ENCODE measurements at regions of chr3 and their contacts with region 1.

Region 1: DNA sequence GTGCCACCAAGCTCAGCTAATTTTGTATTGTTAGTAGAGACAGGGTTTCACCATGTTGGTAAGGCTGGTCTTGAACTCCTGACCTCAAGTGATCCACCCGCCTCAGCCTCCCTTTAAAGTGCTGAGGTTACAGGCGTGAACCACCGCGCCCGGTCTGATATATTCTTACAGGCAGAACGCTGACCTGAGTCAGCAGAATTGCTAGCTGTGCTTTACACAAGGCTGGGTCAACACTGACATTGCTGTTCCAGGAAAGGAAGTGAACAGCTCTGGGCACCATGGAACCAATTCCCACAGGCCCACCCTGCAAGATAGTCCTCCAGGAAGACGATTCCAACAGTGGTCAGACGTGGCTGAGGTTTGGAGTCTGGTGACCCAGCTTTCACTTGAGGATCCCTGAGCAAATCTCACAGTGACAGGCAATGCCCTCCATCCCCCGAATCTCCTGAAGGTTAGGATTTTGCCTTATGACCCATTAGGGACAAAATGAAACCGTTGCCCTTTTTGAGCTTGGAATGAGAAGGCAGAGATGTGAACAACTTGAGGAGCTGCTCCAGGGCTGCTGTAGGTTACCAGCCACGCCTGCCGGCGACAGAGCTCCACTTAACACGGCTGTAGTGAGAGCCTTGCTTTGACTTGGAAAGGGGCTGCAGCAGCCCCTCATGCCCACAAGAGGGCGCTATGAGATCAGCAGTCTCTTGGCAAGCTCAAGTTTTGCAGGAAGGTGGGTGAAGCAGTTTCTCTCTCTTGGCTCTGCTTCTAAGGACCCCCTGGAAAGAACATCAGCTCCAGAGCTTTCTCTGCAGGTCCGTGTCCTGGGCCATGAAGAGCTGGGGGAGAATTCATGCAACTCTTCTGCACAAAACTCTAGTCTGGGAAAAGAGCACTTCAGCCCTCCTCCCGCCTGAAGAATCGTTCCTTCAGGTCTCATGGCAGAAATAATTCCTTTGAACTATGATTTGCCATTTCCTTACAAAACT is 74.1 kb downstream of the SENP2 start:
- DNase-seq: peak; percentile 80
- ATAC-seq: peak; percentile 94
- H3K4me3 Mint-ChIP-seq: no peak overlapping the region
- H3K27ac Mint-ChIP-seq: no peak overlapping the region
- H3K4me1 Mint-ChIP-seq: no peaks in the 10 kb centered on the region
- H3K27me3 Mint-ChIP-seq: peaks cover 6% of the 10 kb centered on the region
- CTCF ChIP-seq: peak; percentile 90

Region 2: GRCh38 chr3:185639632-185640206 is 20.5 kb before region 1 on chr3:
- CTCF ChIA-PET with region 1: interaction called, 31 read pairs
- POLR2A ChIA-PET with region 1: no interaction called
- intact Hi-C with region 1: no loop called
- DNase-seq: no peak
- ATAC-seq: no peak
- H3K4me3 Mint-ChIP-seq: no peak overlapping the region
- H3K27ac Mint-ChIP-seq: no peak overlapping the region
- H3K4me1 Mint-ChIP-seq: peaks cover 5% of the 10 kb centered on the region
- H3K27me3 Mint-ChIP-seq: peaks cover 3% of the 10 kb centered on the region
- CTCF ChIP-seq: no peak

Region 3: GRCh38 chr3:185693985-185694653 is 33.9 kb after region 1 on chr3:
- CTCF ChIA-PET with region 1: interaction called, 10 read pairs
- POLR2A ChIA-PET with region 1: no interaction called
- intact Hi-C with region 1: no loop called
- DNase-seq: no peak
- ATAC-seq: no peak
- H3K4me3 Mint-ChIP-seq: no peak overlapping the region
- H3K27ac Mint-ChIP-seq: no peak overlapping the region
- H3K4me1 Mint-ChIP-seq: no peaks in the 10 kb centered on the region
- H3K27me3 Mint-ChIP-seq: no peaks in the 10 kb centered on the region
- CTCF ChIP-seq: no peak

Region 4: DNA sequence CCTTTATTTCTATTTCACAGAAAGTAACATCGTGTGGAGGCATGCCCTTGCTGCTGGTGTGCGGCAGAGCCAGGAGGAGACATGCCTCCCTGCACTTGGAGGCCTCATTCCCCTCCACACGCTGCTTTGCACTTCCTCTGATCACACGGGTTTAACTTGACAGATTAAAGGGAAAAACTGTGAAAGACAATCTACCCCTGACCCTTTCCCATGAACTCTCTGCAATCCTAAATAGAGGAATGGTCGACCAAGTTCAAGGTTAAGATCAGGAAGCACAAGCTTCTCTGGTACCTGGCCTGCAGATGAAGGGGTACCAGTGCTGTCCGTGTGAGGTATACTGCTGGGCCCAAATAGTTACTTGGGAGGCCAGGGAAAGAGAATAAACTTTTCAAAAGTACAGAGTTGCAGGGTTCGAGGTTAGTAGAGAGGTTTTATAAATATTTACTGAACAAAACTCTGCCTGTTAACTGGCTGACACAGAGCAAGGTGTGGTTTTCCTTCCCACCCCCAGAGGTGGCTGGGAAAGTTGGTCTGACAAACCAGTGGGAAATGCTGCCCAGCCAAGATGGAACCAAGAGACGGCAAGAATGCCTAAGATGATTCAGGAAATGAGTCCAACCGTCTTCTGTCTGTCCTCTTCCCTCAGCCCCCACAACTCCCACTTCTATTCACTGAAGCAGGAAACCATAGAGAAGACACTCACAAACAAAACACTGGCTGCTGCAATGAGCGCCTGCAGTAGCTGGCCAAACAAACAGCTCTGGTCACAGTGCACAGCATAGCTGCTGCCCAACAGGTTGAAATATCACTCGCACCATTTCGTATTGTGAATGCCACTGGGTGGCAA is 85.0 kb after region 1 on chr3:
- CTCF ChIA-PET with region 1: interaction called, 13 read pairs
- POLR2A ChIA-PET with region 1: no interaction called
- intact Hi-C with region 1: no loop called
- DNase-seq: no peak
- ATAC-seq: no peak
- H3K4me3 Mint-ChIP-seq: no peak overlapping the region
- H3K27ac Mint-ChIP-seq: no peak overlapping the region
- H3K4me1 Mint-ChIP-seq: peaks cover 4% of the 10 kb centered on the region
- H3K27me3 Mint-ChIP-seq: peaks cover 8% of the 10 kb centered on the region
- CTCF ChIP-seq: no peak

Region 5: GRCh38 chr3:185770109-185770508 is 109.9 kb after region 1 on chr3:
- CTCF ChIA-PET with region 1: interaction called, 59 read pairs
- POLR2A ChIA-PET with region 1: no interaction called
- intact Hi-C with region 1: loop called (anchors 1 kb)
- DNase-seq: no peak
- ATAC-seq: no peak
- H3K4me3 Mint-ChIP-seq: no peak overlapping the region
- H3K27ac Mint-ChIP-seq: no peak overlapping the region
- H3K4me1 Mint-ChIP-seq: peaks cover 4% of the 10 kb centered on the region
- H3K27me3 Mint-ChIP-seq: peaks cover 5% of the 10 kb centered on the region
- CTCF ChIP-seq: no peak

Region 6: DNA sequence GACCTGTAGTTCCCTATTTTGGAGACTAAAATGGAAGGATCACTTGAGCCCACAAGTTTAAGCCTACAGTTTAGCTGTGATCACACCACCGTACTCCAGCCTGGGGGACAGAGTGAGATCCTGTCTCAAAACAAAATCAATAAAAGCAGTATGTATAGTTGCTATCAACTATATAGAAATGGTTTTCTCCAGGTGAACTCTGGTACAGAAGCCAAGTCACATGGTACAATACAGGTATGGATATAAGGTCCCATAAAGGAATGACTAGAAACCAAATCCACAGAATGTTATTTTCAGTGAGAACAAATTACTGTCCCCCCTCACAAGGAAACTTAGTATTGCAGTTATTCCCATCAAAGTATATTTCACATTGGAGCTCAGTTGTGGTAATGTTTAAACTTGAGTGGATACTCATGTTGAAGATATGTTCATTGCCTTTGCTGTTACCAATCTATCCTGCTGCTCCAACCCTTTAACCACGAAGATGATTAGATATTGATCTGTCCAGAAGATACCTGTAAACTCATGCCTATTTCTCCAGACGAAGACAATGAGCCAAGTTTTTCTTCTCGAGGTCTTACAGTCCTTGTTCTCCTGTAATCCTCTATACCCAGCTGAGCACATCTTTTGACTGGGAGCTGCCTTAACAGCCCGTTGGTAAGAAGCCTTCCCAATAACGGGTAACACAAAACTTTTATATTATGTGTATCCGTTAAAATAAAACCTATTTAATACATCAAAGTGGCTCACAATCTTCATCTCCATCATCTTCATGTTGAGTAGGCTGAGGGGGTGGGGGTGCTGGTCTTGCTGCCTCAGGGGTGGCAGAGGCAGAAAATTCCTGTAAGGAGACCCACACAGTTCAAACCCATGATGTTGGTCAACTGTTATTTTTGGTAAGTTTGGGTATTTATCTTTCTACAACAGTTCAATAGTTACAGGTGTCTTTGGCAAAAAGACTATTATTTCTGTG is 253.0 kb after region 1 on chr3:
- CTCF ChIA-PET with region 1: interaction called, 13 read pairs
- POLR2A ChIA-PET with region 1: no interaction called
- intact Hi-C with region 1: no loop called
- DNase-seq: no peak
- ATAC-seq: peak; percentile 10
- H3K4me3 Mint-ChIP-seq: no peak overlapping the region
- H3K27ac Mint-ChIP-seq: peak overlapping the region; percentile 40
- H3K4me1 Mint-ChIP-seq: peaks cover 2% of the 10 kb centered on the region
- H3K27me3 Mint-ChIP-seq: no peaks in the 10 kb centered on the region
- CTCF ChIP-seq: no peak